HEK293T (cell line): ENCODE measurements at regions of chr2 and their contacts with region 1.

Region 1: GRCh38 chr2:63600881-63601460 is 12.2 kb downstream of the MDH1 start:
- DNase-seq: no peak

Region 2: GRCh38 chr2:63514781-63515180 is 86.2 kb before region 1 on chr2:
- CTCF ChIA-PET with region 1: no interaction called
- POLR2A ChIA-PET with region 1: no interaction called
- DNase-seq: no peak

Region 3: DNA sequence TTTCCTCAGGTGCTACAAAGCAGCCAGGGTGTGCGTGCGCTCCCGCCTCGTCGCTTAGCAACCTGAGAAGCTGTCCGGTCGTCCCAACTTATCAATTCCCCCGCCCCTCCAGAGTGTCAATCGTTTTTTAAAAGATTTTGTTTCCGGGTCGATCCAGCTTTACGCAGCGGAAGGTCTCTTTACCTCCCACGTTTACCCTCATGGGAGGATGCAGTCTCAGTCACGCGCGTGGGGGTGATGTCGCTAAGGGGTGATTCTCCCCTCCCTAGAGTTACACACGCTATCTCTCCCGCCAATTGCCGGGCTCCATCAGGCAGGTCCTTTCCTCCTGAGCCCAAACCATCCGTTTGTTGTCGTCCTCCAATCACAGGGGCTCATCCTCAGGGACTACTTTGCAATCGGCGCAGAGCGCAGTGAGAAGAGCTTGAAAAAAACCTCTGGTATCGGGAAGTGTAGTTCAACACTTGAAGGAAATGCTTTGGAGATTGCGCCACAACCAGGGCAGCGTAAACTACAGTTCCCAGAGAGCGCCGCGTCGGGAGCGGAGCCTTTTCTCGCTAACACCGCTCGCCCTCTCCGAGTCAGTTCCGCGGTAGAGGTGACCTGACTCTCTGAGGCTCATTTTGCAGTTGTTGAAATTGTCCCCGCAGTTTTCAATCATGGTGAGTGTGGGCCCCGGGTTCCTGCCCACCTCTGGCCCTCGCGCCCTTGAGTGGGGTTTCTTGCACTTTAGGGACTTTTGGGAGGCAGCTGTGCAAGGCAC is 12.4 kb before region 1 on chr2 and contains the starts of genes MDH1 and WDPCP:
- CTCF ChIA-PET with region 1: no interaction called
- POLR2A ChIA-PET with region 1: interaction called, 15 read pairs
- DNase-seq: peak; percentile 81

Region 4: GRCh38 chr2:63772061-63772460 is 171.1 kb after region 1 on chr2:
- CTCF ChIA-PET with region 1: no interaction called
- POLR2A ChIA-PET with region 1: no interaction called
- DNase-seq: no peak